ENCODE measurements at regions of chr10 and their contacts with region 1.

Region 1: GRCh38 chr10:25174461-25175230 is at the start of gene GPR158:
- DNase-seq: peak; percentile 90
- H3K4me3 ChIP-seq: peak within 1 kb of the TSS; percentile 59 to 60
- H3K27ac ChIP-seq: no peak within 1 kb of the TSS
- H3K4me1 ChIP-seq: peaks cover 0 to 13% of the 10 kb centered on the region in 2 experiments; a peak in 1 of 4 replicates
- H3K27me3 ChIP-seq: peaks cover 22% of the 10 kb centered on the region
- CTCF ChIP-seq: no peak
- EP300 ChIP-seq: no peak
- RAD21 ChIP-seq: no peak
- polyA plus RNA-seq, gene GPR158: not detected in 2 replicates

Region 2: GRCh38 chr10:25159591-25159990 is 15.1 kb before region 1 on chr10:
- CTCF ChIA-PET with region 1: interaction called, 10 read pairs
- POLR2A ChIA-PET with region 1: no interaction called
- DNase-seq: no peak
- H3K4me3 ChIP-seq: no peak overlapping the region
- H3K27ac ChIP-seq: no peak overlapping the region
- H3K4me1 ChIP-seq: no peaks in the 10 kb centered on the region
- H3K27me3 ChIP-seq: no peaks in the 10 kb centered on the region
- CTCF ChIP-seq: no peak
- EP300 ChIP-seq: no peak
- RAD21 ChIP-seq: no peak

Region 3: DNA sequence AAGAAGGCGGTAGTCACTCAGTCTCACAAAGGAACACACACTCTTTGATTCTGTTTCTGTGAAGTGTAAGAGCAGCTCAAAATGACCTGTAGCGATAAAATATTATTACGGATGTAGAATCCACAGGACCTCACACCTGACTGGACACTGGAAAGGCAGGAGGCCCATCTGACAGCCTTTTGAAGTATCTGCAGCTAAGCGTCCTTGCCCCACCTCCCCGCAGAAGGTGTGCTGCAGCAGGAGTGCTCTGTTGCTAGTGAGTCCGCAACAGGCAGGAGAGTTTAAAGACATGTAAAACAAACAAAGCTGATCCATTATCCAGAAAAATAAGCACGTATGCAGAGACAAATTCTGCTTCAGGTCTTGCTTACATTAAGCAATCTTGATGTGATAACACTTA is 355.7 kb after region 1 on chr10:
- CTCF ChIA-PET with region 1: no interaction called
- POLR2A ChIA-PET with region 1: no interaction called
- DNase-seq: no peak
- H3K4me3 ChIP-seq: no peak overlapping the region
- H3K27ac ChIP-seq: no peak overlapping the region
- H3K4me1 ChIP-seq: no peaks in the 10 kb centered on the region
- H3K27me3 ChIP-seq: no peaks in the 10 kb centered on the region
- CTCF ChIP-seq: no peak
- EP300 ChIP-seq: no peak
- RAD21 ChIP-seq: no peak